Activated B cell treated with CpG ODN at 0.5 μM for 24 hours (primary cell): ENCODE measurements at regions of chr11 and their contacts with region 1.

Region 1: GRCh38 chr11:104956528-104956927 is 11.8 kb downstream of the CASP4 start:
- DNase-seq: no peak
- ATAC-seq: no peak
- H3K4me3 Mint-ChIP-seq: no peak overlapping the region
- H3K27ac Mint-ChIP-seq: no peak overlapping the region
- H3K4me1 Mint-ChIP-seq: peaks cover 59% of the 10 kb centered on the region
- H3K27me3 Mint-ChIP-seq: no peaks in the 10 kb centered on the region
- CTCF ChIP-seq: no peak

Region 2: DNA sequence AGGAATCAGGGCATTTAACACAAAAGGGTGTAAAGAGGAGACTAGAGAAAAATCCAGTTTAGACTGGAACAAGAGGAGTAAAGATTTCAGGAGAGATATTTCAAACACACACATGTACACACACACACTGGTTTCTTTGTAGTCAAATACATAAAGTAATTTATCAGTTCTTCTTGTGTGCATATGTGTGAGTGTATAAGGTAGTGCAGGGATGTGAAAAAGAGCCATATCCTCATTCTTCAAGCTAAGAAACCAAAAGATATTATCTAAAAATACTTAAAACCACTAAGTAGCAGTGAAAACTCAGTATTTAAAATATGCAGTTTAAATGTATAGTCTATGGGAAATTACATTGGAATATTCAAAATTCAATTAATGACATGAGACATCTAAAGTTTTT is 235.6 kb after region 1 on chr11:
- CTCF ChIA-PET with region 1: no interaction called
- POLR2A ChIA-PET with region 1: no interaction called
- intact Hi-C with region 1: loop called (anchors 10 kb)
- DNase-seq: no peak
- ATAC-seq: no peak
- H3K4me3 Mint-ChIP-seq: no peak overlapping the region
- H3K27ac Mint-ChIP-seq: no peak overlapping the region
- H3K4me1 Mint-ChIP-seq: no peaks in the 10 kb centered on the region
- H3K27me3 Mint-ChIP-seq: no peaks in the 10 kb centered on the region
- CTCF ChIP-seq: no peak